Activated naive CD4-positive, alpha-beta T cell treated with anti-CD3 and anti-CD28 coated beads for 36 hours (primary cell): ENCODE measurements at regions of chr9 and their contacts with region 1.

Region 1: GRCh38 chr9:33167046-33167808 is at the start of gene B4GALT1:
- DNase-seq: peak; percentile 97
- H3K4me3 Mint-ChIP-seq: peak within 1 kb of the TSS; percentile 97
- H3K27ac Mint-ChIP-seq: peak within 1 kb of the TSS; percentile 97
- H3K4me1 Mint-ChIP-seq: peaks cover 53% of the 10 kb centered on the region
- H3K27me3 Mint-ChIP-seq: no peaks in the 10 kb centered on the region
- total RNA-seq, gene B4GALT1: 42.8 to 44.1 TPM

Region 2: DNA sequence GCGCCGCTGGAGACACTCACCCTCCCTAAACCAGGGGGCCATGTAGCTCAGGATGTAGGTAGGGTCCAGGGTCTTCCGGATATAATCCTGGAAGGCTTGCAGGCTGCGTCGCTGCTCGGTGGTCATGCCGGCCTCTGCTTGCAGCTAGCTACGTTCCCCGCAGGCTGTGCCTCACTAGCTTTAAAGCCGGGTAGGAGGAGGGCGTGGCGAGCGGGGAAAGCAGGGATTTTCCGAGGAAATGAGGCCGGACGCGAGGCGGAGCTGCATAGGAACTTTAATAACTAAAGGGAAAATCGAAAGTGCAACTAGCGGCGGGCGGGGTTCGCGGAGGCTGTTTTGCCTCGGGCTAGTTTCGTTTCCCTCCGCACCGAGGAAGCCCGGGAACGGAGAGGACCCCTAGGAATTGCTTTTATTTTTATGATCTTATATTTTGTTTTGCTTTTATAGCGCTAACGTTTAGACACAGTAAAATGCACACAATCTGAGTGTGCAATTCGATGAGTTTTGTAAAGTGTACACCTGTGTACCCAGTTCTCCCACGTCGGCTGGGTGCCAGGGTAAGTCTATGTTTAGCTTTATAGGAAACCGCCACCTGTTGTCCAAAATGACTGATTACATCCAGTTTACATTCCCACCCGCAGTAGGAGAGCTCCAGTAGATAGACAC is 641.1 kb before region 1 on chr9 and contains the start of gene RIGI:
- CTCF ChIA-PET with region 1: no interaction called
- intact Hi-C with region 1: loop called (anchors 5 kb)
- DNase-seq: peak; percentile 90
- H3K4me3 Mint-ChIP-seq: peak within 1 kb of the TSS; percentile 77
- H3K27ac Mint-ChIP-seq: peak within 1 kb of the TSS; percentile 84
- H3K4me1 Mint-ChIP-seq: peaks cover 32% of the 10 kb centered on the region
- H3K27me3 Mint-ChIP-seq: no peaks in the 10 kb centered on the region
- total RNA-seq, gene RIGI: 7.5 to 8.4 TPM

Region 3: GRCh38 chr9:32571969-32572899 is 595.0 kb before region 1 on chr9:
- CTCF ChIA-PET with region 1: no interaction called
- intact Hi-C with region 1: loop called (anchors 1 kb)
- DNase-seq: peak; percentile 88
- H3K4me3 Mint-ChIP-seq: peak overlapping the region; percentile 88
- H3K27ac Mint-ChIP-seq: peak overlapping the region; percentile 92
- H3K4me1 Mint-ChIP-seq: peaks cover 16% of the 10 kb centered on the region
- H3K27me3 Mint-ChIP-seq: no peaks in the 10 kb centered on the region

Region 4: DNA sequence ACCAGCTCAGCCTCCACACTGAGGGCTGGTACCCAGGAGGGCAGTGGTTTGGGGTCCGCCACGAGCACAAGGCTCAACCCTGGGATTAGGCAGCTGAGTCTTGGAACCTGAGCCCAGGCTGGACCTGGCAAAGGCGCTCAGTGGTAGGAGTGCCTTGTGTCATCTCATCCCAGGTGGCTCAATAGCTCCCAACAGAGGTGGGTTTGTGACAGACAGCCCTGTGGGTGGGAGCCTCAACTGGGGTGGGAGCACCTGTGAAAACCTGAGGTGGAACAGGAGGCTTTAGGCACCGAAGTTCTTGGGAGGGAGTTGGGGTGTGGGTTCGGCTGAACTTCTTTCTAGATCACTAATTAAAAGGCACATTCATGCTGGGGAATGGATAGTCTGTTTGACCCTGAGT is 55.6 kb before region 1 on chr9:
- CTCF ChIA-PET with region 1: interaction called, 3 read pairs
- intact Hi-C with region 1: loop called (anchors 2 kb)
- DNase-seq: no peak
- H3K4me3 Mint-ChIP-seq: no peak overlapping the region
- H3K27ac Mint-ChIP-seq: peak overlapping the region; percentile 9
- H3K4me1 Mint-ChIP-seq: peaks cover 11% of the 10 kb centered on the region
- H3K27me3 Mint-ChIP-seq: no peaks in the 10 kb centered on the region

Region 5: GRCh38 chr9:33225319-33226149 is 58.3 kb after region 1 on chr9:
- CTCF ChIA-PET with region 1: interaction called, 22 read pairs
- intact Hi-C with region 1: loop called (anchors 1 kb)
- DNase-seq: peak; percentile 89
- H3K4me3 Mint-ChIP-seq: no peak overlapping the region
- H3K27ac Mint-ChIP-seq: peak overlapping the region; percentile 4
- H3K4me1 Mint-ChIP-seq: peaks cover 15% of the 10 kb centered on the region
- H3K27me3 Mint-ChIP-seq: no peaks in the 10 kb centered on the region

Region 6: GRCh38 chr9:33306037-33306436 is 138.8 kb after region 1 on chr9:
- CTCF ChIA-PET with region 1: no interaction called
- intact Hi-C with region 1: loop called (anchors 5 kb)
- DNase-seq: peak; percentile 69
- H3K4me3 Mint-ChIP-seq: no peak overlapping the region
- H3K27ac Mint-ChIP-seq: no peak overlapping the region
- H3K4me1 Mint-ChIP-seq: peaks cover 10% of the 10 kb centered on the region
- H3K27me3 Mint-ChIP-seq: no peaks in the 10 kb centered on the region